ENCODE measurements at regions of chr22 and their contacts with region 1.

Region 1: GRCh38 chr22:23385291-23386244 is 194.5 kb downstream of the IGLL1 start:
- DNase-seq: peak; percentile 73 to 85
- ATAC-seq: peak; percentile 80 to 91 (median 85)
- H3K4me3 ChIP-seq: no peak overlapping the region
- H3K27ac ChIP-seq: no peak overlapping the region
- H3K4me1 ChIP-seq: peaks cover 0 to 7% (median 0%) of the 10 kb centered on the region in 9 donors
- H3K27me3 ChIP-seq: peaks cover 0 to 11% (median 3%) of the 10 kb centered on the region in 7 donors
- CTCF ChIP-seq: peak; percentile 96 to 100 (median 99)

Region 2: GRCh38 chr22:23305922-23306374 is 79.6 kb before region 1 on chr22:
- intact Hi-C with region 1: loop called in 2 of 10 experiments (anchors 5 to 10 kb)
- DNase-seq: peak; percentile 63 to 78
- ATAC-seq: peak; percentile 74 to 96 (median 88)
- H3K4me3 ChIP-seq: peak overlapping the region in 1 of 10 donors; percentile 24
- H3K27ac ChIP-seq: peak overlapping the region; percentile 63 to 88 (median 78)
- H3K4me1 ChIP-seq: peaks cover 10 to 26% (median 24%) of the 10 kb centered on the region in 9 donors
- H3K27me3 ChIP-seq: no peaks in the 10 kb centered on the region
- CTCF ChIP-seq: no peak

Region 3: DNA sequence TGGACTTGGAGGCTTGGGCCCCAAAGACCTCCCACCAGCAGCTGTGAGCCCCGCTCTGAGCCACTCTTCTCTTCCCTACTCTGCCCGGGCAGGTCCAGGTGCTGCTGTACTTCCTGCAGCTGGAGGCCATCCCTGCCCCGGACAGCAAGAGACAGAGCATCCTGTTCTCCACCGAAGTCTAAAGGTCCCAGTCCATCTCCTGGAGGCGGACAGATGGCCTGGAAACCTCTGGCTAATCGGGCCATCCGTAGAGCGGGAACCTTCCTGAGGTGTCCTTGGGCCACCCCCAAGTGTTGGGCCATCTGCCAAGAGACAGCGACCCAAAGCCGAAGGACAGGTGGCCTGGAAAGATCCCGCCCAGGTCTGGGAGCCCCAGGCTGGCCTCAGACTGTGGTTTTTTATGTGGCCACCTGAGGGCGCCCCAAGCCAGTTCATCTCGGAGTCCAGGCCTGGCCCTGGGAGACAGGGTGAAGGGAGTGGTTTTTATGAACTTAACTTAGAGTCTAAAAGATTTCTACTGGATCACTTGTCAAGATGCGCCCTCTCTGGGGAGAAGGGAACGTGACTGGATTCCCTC is 70.1 kb before region 1 on chr22:
- intact Hi-C with region 1: loop called in 6 of 10 experiments (anchors 2 to 5 kb)
- DNase-seq: peak; percentile 43 to 77
- ATAC-seq: peak in 2 of 8 donors; percentile 17 to 75
- H3K4me3 ChIP-seq: no peak overlapping the region
- H3K27ac ChIP-seq: peak overlapping the region in 2 of 10 donors; percentile 26 to 41
- H3K4me1 ChIP-seq: peaks cover 0 to 8% (median 0%) of the 10 kb centered on the region in 9 donors
- H3K27me3 ChIP-seq: no peaks in the 10 kb centered on the region
- CTCF ChIP-seq: peak; percentile 58 to 81 (median 66)

Region 4: GRCh38 chr22:23322547-23322946 is 63.0 kb before region 1 on chr22:
- intact Hi-C with region 1: loop called in 2 of 10 experiments (anchors 5 kb)
- DNase-seq: no peak
- ATAC-seq: no peak
- H3K4me3 ChIP-seq: no peak overlapping the region
- H3K27ac ChIP-seq: no peak overlapping the region
- H3K4me1 ChIP-seq: no peaks in the 10 kb centered on the region
- H3K27me3 ChIP-seq: no peaks in the 10 kb centered on the region
- CTCF ChIP-seq: no peak